CD4-positive, alpha-beta memory T cell (primary cell): ENCODE measurements at regions of chr20 and their contacts with region 1.

Region 1: DNA sequence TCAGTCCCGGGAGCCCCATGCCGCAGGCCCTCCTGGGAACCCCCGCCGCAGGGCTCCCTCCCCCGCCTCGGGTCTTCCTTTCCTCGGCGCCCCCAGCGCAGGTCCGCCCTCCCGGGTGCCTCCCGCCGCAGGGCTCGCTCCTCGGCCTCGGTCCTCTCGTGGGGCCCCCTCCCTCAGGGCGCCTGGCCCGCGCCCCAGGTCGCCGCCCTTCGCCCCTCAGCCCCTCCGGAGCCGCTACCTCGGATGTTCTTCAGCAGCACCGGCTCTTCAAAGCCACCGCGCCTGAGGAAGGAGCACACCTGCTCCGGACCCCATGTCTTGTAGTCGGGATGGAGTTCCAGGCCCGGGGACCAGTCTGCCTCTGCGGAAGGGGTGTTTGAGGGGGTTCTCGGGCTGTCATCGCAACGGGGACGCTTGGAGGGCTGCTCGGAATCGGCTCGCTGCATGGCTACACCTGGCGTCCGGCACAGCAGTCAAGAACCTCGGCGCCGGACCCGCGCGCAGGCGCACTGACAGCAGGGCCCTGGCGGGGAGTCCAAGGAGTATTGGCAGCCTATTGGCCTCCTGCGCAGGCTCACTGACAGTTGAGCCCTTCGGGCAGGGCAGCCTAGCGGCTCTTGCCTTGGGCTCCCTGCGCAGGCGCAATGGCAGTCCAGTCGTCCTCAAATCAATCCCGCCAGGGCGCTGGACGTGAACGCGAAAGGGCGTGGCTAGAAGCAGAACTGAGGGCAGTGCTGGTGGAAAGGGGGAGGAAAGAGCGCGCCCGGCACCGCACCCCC is at the start of gene SAMHD1:
- DNase-seq: peak; percentile 86 to 89 (median 86)
- H3K4me3 ChIP-seq: peak within 1 kb of the TSS; percentile 90 to 98
- H3K4me3 Mint-ChIP-seq: peak within 1 kb of the TSS; percentile 95 to 100 (median 98)
- H3K27ac ChIP-seq: peak within 1 kb of the TSS; percentile 87
- H3K27ac Mint-ChIP-seq: peak within 1 kb of the TSS; percentile 94 to 100 (median 98)
- H3K4me1 ChIP-seq: peaks cover 49% of the 10 kb centered on the region
- H3K4me1 Mint-ChIP-seq: peaks cover 24 to 55% (median 35%) of the 10 kb centered on the region in 4 donors
- H3K27me3 ChIP-seq: no peaks in the 10 kb centered on the region
- H3K27me3 Mint-ChIP-seq: no peaks in the 10 kb centered on the region
- total RNA-seq, gene SAMHD1: 216 to 223 TPM

Region 2: DNA sequence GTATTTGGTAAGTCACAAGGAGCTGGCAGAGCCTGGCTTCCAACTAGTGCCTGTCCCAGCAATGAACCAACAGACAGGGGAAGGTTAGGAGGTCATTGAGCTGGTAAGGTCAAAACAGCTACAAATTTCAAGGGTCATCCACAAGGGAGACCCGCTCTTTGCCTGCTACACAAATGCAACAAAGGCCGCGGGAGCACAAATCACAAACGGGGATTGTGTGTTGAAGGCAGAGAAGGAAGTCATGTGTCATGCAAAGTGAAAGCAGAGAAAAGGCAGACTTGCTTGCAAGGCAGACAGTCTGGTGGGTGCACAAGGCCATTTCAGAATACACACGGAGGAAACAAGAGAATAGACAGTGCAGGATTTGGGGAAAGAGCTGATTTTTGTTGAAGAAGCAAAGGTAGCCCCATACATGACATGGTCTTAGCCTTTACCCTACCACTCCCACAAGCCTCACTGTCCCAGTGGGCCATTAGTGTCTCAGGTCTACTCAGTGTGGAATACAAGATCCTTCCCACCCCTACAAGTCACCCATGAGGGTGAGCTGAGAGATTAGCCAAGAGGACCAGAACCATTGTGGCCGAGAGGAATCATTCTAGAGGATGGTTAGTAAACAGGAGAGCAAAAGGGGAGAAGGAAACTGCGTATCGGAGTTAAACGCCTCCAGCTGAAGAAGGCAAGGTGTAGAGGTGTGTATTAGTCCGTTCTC is 18.2 kb after region 1 on chr20:
- CTCF ChIA-PET with region 1: interaction called, 10 read pairs
- POLR2A ChIA-PET with region 1: interaction called, 77 read pairs
- intact Hi-C with region 1: no loop called
- DNase-seq: peak in 4 of 5 donors; percentile 39 to 48 (median 45)
- H3K4me3 ChIP-seq: peak overlapping the region in 1 of 2 donors; percentile 51
- H3K4me3 Mint-ChIP-seq: peak overlapping the region; percentile 4 to 91 (median 80)
- H3K27ac ChIP-seq: peak overlapping the region; percentile 36
- H3K27ac Mint-ChIP-seq: peak overlapping the region; percentile 77 to 98 (median 95)
- H3K4me1 ChIP-seq: peaks cover 77% of the 10 kb centered on the region
- H3K4me1 Mint-ChIP-seq: peaks cover 45 to 74% (median 64%) of the 10 kb centered on the region in 4 donors
- H3K27me3 ChIP-seq: no peaks in the 10 kb centered on the region
- H3K27me3 Mint-ChIP-seq: no peaks in the 10 kb centered on the region

Region 3: GRCh38 chr20:36975099-36975818 is 23.9 kb after region 1 on chr20:
- CTCF ChIA-PET with region 1: interaction called, 10 read pairs
- POLR2A ChIA-PET with region 1: interaction called, 77 read pairs
- intact Hi-C with region 1: loop called (anchors 1 kb)
- DNase-seq: peak; percentile 82 to 88 (median 84)
- H3K4me3 ChIP-seq: no peak overlapping the region
- H3K4me3 Mint-ChIP-seq: peak overlapping the region; percentile 48 to 79 (median 66)
- H3K27ac ChIP-seq: peak overlapping the region; percentile 21
- H3K27ac Mint-ChIP-seq: peak overlapping the region; percentile 77 to 96 (median 89)
- H3K4me1 ChIP-seq: peaks cover 55% of the 10 kb centered on the region
- H3K4me1 Mint-ChIP-seq: peaks cover 21 to 50% (median 37%) of the 10 kb centered on the region in 4 donors
- H3K27me3 ChIP-seq: no peaks in the 10 kb centered on the region
- H3K27me3 Mint-ChIP-seq: no peaks in the 10 kb centered on the region

Region 4: GRCh38 chr20:36988494-36988966 is 37.1 kb after region 1 on chr20:
- CTCF ChIA-PET with region 1: interaction called, 5 read pairs
- POLR2A ChIA-PET with region 1: interaction called, 3 read pairs
- intact Hi-C with region 1: loop called (anchors 5 kb)
- DNase-seq: peak; percentile 40 to 62 (median 53)
- H3K4me3 ChIP-seq: no peak overlapping the region
- H3K4me3 Mint-ChIP-seq: peak overlapping the region in 7 of 8 donors; percentile 16 to 71 (median 30)
- H3K27ac ChIP-seq: peak overlapping the region; percentile 7
- H3K27ac Mint-ChIP-seq: peak overlapping the region; percentile 72 to 96 (median 92)
- H3K4me1 ChIP-seq: peaks cover 28% of the 10 kb centered on the region
- H3K4me1 Mint-ChIP-seq: peaks cover 26 to 44% (median 31%) of the 10 kb centered on the region in 4 donors
- H3K27me3 ChIP-seq: no peaks in the 10 kb centered on the region
- H3K27me3 Mint-ChIP-seq: no peaks in the 10 kb centered on the region